CD4-positive, alpha-beta memory T cell (primary cell): ENCODE measurements at regions of chr2 and their contacts with region 1.

Region 1: GRCh38 chr2:6917071-6917760 is at the start of gene RNF144A:
- DNase-seq: peak; percentile 64 to 83 (median 76)
- H3K4me3 ChIP-seq: peak within 1 kb of the TSS; percentile 44 to 47
- H3K4me3 Mint-ChIP-seq: peak within 1 kb of the TSS; percentile 72 to 84 (median 78)
- H3K27ac ChIP-seq: peak within 1 kb of the TSS; percentile 43
- H3K27ac Mint-ChIP-seq: peak within 1 kb of the TSS in 5 of 7 donors; percentile 57 to 88 (median 74)
- H3K4me1 ChIP-seq: peaks cover 68% of the 10 kb centered on the region
- H3K4me1 Mint-ChIP-seq: peaks cover 46 to 79% (median 60%) of the 10 kb centered on the region in 4 donors
- H3K27me3 ChIP-seq: no peaks in the 10 kb centered on the region
- H3K27me3 Mint-ChIP-seq: no peaks in the 10 kb centered on the region
- total RNA-seq, gene RNF144A: 34.3 to 41.1 TPM

Region 2: DNA sequence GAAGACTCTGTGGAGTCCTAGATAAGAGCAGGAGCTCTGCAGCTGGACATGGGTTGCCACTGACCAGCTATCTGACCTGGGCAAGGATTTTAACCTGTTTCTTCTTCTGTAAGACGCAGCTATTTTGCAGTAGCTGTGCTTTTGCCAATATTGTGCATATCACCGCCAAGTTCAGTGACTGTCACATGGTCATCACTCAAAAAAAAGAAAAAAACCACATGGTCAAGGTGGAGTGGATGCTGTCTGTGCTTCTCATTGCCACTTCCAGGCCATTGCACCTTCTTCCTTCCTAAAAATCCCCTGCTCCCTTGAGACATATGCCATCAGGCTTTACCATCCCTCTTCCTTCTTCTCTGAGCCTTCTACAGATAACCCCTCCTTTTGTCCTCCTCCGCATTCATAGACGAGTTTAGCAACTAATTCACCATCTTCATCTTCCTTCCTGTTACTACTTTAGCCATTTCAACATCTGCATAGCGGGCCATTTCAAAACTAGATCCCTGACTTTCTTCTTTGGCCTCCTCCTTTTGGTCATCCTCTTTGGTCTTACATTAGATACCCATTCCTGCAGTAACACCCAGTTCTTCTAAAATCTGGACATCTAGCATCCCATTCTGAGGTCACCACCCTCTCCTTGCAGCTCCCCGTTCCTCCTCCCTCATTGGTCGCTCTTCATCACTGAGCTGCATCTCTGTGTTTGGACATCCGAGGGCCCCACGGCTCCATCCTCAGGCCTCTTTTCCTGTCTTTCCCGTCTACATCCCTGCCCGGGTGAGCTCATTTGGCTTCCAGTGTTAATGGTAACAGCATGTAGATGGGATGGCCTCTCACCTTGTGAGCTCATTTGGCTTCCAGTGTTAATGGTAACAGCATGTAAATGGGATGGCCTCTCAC is 17.8 kb after region 1 on chr2:
- CTCF ChIA-PET with region 1: interaction called, 29 read pairs
- POLR2A ChIA-PET with region 1: interaction called, 6 read pairs
- intact Hi-C with region 1: no loop called
- DNase-seq: no peak
- H3K4me3 ChIP-seq: no peak overlapping the region
- H3K4me3 Mint-ChIP-seq: peak overlapping the region in 5 of 8 donors; percentile 3 to 31 (median 9)
- H3K27ac ChIP-seq: no peak overlapping the region
- H3K27ac Mint-ChIP-seq: peak overlapping the region in 2 of 7 donors; percentile 17 to 37
- H3K4me1 ChIP-seq: peaks cover 30% of the 10 kb centered on the region
- H3K4me1 Mint-ChIP-seq: peaks cover 36 to 77% (median 51%) of the 10 kb centered on the region in 4 donors
- H3K27me3 ChIP-seq: no peaks in the 10 kb centered on the region
- H3K27me3 Mint-ChIP-seq: no peaks in the 10 kb centered on the region

Region 3: DNA sequence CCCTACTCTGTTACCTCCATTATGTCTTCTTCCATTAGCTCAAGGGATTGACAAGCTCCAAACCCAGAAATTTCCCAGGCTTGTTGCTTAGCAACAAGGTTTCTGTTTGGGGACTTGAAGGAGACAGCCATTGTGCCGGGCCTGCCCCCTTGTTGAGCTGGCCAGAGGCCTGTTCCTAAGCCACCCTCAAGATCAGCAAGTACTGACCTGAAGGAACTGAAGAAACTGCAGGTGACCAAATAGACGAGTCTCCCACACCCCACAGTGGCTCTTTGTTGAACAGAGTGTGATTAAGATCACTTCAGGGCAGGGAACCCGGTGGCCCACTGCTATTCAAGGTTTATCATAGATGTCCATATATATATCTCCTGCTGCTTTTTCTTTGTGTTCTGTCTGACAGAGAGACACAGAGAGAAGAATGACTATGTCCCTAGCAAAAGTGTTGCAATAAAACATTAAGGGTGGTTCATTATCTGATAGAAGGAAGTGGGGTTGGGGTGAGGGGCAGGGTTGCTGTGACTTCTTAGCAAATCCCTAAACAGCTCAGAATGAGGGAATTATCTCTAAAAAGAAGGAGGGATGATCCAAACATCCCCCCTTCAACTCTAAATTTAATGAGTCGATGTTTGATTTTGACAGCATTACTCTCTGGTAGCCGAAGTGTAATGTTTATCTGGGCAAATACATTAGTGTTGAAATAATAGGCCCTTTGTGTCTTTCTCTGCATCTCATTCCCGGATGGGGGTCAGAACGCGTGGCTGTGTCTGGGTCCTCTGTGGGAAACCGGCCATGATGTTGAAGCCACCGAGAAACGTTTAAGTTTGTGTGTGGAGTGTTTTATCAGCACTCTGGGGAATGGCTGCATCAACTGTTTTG is 69.3 kb after region 1 on chr2:
- CTCF ChIA-PET with region 1: no interaction called
- POLR2A ChIA-PET with region 1: no interaction called
- intact Hi-C with region 1: no loop called
- DNase-seq: no peak
- H3K4me3 ChIP-seq: no peak overlapping the region
- H3K4me3 Mint-ChIP-seq: peak overlapping the region in 2 of 8 donors; percentile 4 to 18
- H3K27ac ChIP-seq: no peak overlapping the region
- H3K27ac Mint-ChIP-seq: peak overlapping the region in 1 of 7 donors; percentile 48
- H3K4me1 ChIP-seq: no peaks in the 10 kb centered on the region
- H3K4me1 Mint-ChIP-seq: peaks cover 5 to 37% (median 20%) of the 10 kb centered on the region in 4 donors
- H3K27me3 ChIP-seq: no peaks in the 10 kb centered on the region
- H3K27me3 Mint-ChIP-seq: no peaks in the 10 kb centered on the region